ENCODE measurements at regions of chr1 and their contacts with region 1.

Region 1: DNA sequence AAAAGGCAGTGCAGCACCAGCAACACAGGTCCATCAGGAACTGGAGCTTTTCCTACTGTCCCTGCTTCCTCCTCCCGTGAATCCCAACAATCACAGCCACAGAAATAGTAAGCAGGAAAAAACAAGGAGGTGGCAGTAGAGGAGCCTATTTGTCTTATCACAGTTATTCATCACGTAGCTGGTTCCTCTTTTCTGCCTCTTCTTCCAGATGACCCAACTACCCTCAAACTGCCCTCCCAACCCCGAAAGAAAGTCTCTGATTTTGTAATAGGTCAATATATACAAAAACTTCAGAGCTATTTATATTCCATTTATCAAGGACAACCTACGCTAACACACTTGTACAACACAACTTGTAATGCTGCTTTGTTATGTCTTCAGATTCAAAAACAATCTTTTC is 21.4 kb downstream of the GNB1 start:
- DNase-seq: no peak
- CTCF ChIP-seq: no peak

Region 2: DNA sequence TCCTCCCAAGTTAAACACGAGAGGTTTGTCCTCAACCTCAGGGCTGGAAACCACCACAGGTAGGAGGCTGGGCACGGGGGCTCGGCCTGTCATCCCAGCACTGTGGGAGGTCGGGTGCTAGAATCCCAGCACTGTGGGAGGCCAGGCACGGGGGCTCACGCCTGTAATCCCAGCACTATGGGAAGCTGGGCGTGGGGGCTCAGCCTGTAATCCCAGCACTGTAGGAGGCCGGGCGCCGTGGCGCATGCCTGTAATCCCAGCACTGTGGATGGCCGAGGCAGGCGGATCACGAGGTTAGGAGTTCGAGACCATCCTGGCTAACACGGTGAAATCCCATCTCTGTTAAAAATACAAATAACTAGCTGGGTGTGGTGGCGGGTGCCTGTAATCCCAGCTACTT is 138.6 kb before region 1 on chr1:
- CTCF ChIA-PET with region 1: no interaction called
- POLR2A ChIA-PET with region 1: no interaction called
- DNase-seq: no peak
- CTCF ChIP-seq: no peak

Region 3: DNA sequence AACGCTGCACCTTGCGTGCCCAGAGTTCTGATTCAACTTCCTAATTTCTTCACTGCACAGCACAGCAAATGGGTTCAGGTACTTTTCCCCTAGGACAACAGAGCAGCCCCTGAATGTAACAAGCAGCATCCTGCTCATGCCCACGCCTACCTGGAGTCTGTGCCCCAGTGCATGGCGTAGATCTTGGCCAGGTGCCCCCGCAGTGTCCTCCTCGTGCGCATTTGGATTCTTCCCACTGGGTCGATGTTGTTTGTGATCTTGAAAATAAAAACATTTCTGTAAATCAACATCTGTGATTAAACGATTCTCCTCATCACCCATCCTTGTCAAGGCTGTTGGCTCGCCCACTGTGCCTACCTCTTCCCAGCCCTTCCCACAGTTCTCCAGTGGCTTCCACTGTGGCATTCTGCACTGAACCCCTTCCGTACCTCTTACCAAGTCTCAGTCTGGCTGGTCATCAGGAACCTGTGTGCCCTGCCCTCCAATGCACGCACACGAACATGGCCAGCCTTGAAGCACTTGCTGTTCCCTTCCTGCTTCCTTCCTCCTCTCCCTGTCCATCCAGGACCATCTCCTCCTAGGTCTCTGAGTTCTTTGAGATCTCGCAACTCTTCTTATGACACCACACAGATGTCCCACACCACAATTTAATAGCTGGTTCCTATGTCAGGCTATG is 53.7 kb before region 1 on chr1:
- CTCF ChIA-PET with region 1: no interaction called
- POLR2A ChIA-PET with region 1: no interaction called
- DNase-seq: no peak
- CTCF ChIP-seq: no peak

Region 4: DNA sequence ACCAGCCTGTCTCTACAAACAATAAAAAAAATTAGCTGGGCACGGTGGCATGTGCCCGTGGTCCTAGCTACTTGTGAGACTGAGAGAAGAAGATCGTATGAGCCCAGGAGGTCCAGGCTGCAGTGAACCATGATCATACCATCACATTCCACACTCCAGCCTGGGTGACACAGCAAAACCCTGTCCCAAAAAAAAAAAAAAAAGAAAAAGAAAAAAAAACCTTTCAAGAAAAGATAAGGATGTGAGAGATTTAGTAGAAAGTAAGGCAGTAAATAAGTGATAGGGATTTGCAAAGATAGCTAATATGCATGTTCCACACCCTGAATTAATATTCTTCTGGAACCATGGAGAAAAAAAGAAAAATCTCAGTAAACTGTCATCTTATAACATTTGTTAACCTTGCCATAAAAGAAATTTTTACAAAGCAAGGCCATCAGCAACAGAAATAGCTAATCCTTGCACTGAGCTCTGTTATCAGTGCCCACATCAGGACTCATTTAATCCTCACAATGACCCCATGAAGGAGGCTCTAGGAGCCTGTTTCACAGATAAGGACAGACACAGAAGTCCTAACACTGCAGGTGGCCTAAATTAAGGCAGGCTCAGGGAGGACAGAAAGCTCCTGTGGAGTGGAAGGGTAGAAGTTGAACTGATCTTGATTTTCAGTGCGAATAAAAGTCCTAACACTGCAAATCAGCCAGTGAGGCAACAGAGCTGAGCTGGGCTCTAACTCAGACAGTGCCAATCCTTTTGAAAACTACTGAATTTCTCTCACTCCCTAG is 13.8 kb after region 1 on chr1:
- CTCF ChIA-PET with region 1: interaction called, 11 read pairs
- POLR2A ChIA-PET with region 1: interaction called, 3 read pairs
- DNase-seq: no peak
- CTCF ChIP-seq: no peak

Region 5: GRCh38 chr1:1889090-1889750 is 19.8 kb after region 1 on chr1:
- CTCF ChIA-PET with region 1: interaction called, 10 read pairs
- POLR2A ChIA-PET with region 1: interaction called, 3 read pairs
- DNase-seq: no peak
- CTCF ChIP-seq: no peak

Region 6: GRCh38 chr1:1899266-1899966 is 29.9 kb after region 1 on chr1:
- CTCF ChIA-PET with region 1: no interaction called
- POLR2A ChIA-PET with region 1: no interaction called
- DNase-seq: peak; percentile 50
- CTCF ChIP-seq: peak; percentile 39